CD4-positive, alpha-beta T cell (primary cell): ENCODE measurements at regions of chr19 and their contacts with region 1.

Region 1: DNA sequence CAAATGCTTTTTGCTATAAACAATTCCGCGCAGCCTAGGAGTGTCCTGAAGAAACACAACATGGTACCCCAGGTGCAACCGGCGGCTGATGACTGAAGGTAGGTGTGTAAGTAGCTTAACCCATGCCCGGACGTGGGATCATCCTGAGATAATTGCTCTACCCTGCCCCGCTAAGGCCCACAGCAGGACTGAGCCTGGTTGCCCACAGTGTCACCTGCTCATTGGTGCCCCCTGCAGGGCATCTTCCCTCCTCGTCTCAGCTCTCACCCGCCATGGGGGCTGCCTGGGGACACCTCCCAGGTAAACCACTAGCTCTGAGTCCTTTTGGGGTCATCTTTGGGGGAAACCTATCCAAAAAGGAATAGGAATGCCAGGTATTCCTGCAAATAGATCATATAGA is 22.3 kb downstream of the TMEM161A start:
- DNase-seq: peak in 13 of 14 experiments; percentile 21 to 67 (median 34)
- ATAC-seq: peak; percentile 52
- H3K4me3 ChIP-seq: no peak overlapping the region
- H3K4me3 Mint-ChIP-seq: no peak overlapping the region
- H3K27ac ChIP-seq: no peak overlapping the region
- H3K27ac Mint-ChIP-seq: no peak overlapping the region
- H3K4me1 ChIP-seq: peaks cover 3% of the 10 kb centered on the region
- H3K4me1 Mint-ChIP-seq: no peaks in the 10 kb centered on the region
- H3K27me3 ChIP-seq: no peaks in the 10 kb centered on the region
- H3K27me3 Mint-ChIP-seq: no peaks in the 10 kb centered on the region
- CTCF ChIP-seq: peak; percentile 42

Region 2: DNA sequence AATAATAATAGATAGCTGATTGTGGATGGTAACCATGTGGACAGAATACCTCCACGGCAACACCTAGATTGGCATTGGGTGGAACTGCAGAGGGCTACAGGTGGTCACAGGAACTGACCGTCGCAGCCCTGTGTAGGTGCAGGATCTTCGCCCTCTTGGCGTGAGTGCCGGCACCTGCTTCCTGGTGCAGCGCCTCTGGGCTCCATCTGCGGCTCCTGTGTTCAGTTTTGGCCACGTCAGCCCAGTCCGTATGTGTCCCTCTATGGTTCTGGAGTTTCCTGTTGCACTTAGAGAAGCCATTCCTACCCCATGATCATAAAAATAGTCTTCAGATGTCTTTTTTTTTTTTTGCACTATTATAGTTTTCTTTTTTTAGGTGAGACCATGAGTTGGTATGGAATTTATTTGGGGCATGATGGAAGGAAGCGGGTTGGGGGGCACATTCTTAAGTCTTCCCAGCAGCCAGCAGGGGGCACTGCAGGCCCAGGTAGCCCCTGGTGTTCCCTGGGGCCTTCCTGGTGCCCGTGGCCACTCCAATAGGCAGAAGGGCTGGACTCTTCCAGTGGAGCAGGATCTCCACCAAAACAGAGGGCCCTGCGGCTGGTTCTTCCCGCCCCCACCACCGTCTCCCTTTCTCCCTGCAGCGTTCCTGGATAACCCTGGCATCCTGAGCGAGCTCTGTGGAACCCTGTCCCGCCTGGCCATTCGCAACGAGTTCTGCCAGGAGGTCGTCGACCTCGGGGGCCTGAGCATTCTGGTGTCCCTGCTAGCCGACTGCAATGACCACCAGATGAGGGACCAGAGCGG is 62.2 kb before region 1 on chr19:
- CTCF ChIA-PET with region 1: interaction called, 3 read pairs
- POLR2A ChIA-PET with region 1: no interaction called
- intact Hi-C with region 1: loop called (anchors 2 kb)
- DNase-seq: peak; percentile 42 to 84 (median 62)
- ATAC-seq: peak; percentile 79
- H3K4me3 ChIP-seq: no peak overlapping the region
- H3K4me3 Mint-ChIP-seq: no peak overlapping the region
- H3K27ac ChIP-seq: no peak overlapping the region
- H3K27ac Mint-ChIP-seq: no peak overlapping the region
- H3K4me1 ChIP-seq: no peaks in the 10 kb centered on the region
- H3K4me1 Mint-ChIP-seq: no peaks in the 10 kb centered on the region
- H3K27me3 ChIP-seq: no peaks in the 10 kb centered on the region
- H3K27me3 Mint-ChIP-seq: no peaks in the 10 kb centered on the region
- CTCF ChIP-seq: peak; percentile 87